A549 (cell line): ENCODE measurements at regions of chr5 and their contacts with region 1.

Region 1: DNA sequence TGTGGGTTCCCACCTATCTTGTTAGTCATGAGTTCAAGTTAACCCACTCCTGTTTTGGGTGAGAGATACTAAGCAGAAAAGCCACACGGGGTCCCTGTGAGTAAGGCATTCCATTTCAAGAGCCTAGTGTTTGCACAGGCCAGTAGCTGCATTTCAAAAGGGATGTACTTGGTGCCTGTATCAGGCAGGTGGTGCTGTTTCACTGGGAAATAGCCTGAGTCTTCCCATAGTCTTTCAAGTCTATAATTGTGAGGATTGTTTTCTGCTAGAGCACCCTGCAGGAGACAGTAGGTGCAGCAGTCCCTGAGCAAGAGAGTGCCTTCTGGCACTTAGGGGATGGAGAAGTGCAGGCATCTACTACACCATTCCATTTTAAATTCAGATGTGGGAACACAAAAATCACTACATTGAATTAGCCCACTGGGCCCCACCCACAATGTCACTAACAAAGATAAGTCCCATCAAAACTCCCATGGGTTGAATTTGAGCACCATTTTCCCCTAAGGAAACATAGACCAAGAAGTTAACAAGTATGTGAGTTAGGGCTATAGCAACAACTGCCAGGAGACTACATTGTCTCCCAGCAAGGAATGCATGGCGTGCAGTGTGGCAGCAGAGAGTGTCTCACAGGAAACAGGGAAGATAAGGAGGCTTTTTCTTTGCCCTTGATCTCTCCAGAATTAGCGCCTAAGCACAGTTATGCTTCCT is 263.2 kb downstream of the COX7C start:
- DNase-seq: peak; percentile 25 to 83
- ATAC-seq: peak; percentile 98 to 99
- H3K4me3 ChIP-seq: no peak overlapping the region
- H3K27ac ChIP-seq: no peak overlapping the region
- H3K4me1 ChIP-seq: no peaks in the 10 kb centered on the region
- CTCF ChIP-seq: peak; percentile 52
- EP300 ChIP-seq: no peak
- POLR2A ChIP-seq: no peak
- RAD21 ChIP-seq: peak; percentile 72 to 80

Region 2: GRCh38 chr5:86968301-86968753 is 87.4 kb after region 1 on chr5:
- CTCF ChIA-PET with region 1: interaction called, 15 read pairs
- POLR2A ChIA-PET with region 1: interaction called, 4 read pairs
- DNase-seq: peak; percentile 21 to 46
- ATAC-seq: peak in 1 of 2 experiments; percentile 53; a peak in 2 of 6 replicates
- H3K4me3 ChIP-seq: no peak overlapping the region
- H3K27ac ChIP-seq: peak overlapping the region in 1 of 2 experiments; percentile 52; a peak in 1 of 6 replicates
- H3K4me1 ChIP-seq: 0 out of 3 replicates have a peak, but pooled peaks cover 3% of the 10 kb centered on the region
- CTCF ChIP-seq: peak; percentile 57
- EP300 ChIP-seq: no peak
- POLR2A ChIP-seq: no peak
- RAD21 ChIP-seq: peak; percentile 73 to 77

Region 3: DNA sequence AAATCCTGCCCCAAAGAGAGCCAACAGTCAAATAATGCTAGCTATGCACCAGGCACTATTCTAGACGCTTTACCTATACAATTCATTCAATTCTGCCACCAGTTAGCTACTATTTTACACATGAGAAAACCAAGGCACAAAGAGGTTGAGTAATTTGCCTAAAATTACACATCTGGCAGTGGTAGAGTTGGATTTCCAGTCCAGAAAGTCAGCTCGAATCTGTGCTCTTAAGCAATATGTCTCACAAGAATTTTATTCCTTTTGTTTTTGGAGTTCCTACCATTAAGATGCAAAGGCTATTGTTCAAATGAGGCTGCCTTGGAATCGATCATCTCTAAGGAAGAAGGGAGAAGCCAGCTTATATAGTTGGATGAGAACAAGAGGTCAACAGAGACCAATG is 129.8 kb after region 1 on chr5:
- CTCF ChIA-PET with region 1: interaction called, 12 read pairs
- POLR2A ChIA-PET with region 1: no interaction called
- DNase-seq: no peak
- ATAC-seq: no peak
- H3K4me3 ChIP-seq: no peak overlapping the region
- H3K27ac ChIP-seq: no peak overlapping the region
- H3K4me1 ChIP-seq: no peaks in the 10 kb centered on the region
- CTCF ChIP-seq: no peak
- EP300 ChIP-seq: no peak
- POLR2A ChIP-seq: no peak
- RAD21 ChIP-seq: no peak